A549 (cell line): ENCODE measurements at regions of chr11 and their contacts with region 1.

Region 1: DNA sequence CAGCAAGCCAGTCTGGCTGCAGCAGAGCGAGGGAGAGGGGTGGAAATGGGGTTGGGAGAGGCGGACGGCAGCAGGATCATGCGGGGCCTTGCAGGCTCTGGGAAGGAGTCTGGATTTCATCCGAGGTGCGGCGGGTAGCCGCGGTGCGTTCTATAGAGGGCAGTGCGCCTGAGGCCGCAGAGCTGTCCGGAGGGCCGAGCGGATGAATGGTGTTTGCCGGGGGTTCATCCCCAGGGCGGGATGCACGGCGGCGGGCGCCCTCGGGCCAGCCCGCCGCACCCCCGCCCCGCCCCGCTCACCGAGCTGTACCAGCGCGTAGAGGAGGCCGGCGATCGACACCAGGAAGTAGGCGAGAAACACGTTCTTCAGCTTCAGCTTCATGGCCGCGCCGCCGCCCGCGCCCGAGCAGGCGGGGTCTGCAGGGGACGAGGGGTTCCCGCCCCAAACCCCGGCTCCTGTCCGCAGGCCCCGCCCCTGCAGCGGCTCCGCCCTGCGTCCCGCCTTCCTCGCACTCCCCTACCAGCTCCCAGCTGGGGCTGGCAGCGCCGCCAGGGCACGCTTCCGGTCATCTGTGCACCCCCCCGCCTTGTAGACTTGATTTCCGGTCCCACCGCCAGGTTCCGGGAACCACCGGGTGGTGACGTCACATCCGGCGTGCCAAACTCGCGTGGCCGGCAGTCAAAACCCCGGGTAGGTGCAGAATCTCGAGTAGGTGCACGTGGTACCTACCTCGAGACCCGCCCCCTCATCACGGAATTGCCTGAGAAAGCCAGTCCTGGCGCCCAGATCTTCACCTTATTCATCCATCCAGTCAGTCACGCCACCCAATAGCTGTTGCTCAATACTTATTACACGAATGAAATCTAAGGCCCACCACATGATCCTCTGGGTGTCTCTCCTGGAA is at the start of gene B3GAT3:
- DNase-seq: peak; percentile 99
- ATAC-seq: peak; percentile 96 to 97
- H3K4me3 ChIP-seq: peak within 1 kb of the TSS; percentile 77
- H3K27ac ChIP-seq: peak within 1 kb of the TSS; percentile 92
- H3K4me1 ChIP-seq: peaks cover 15% of the 10 kb centered on the region
- CTCF ChIP-seq: 0 out of 3 replicates have a peak, but pooled peaks have one; percentile 6
- EP300 ChIP-seq: no peak
- POLR2A ChIP-seq: peak; percentile 80
- RAD21 ChIP-seq: no peak
- polyA plus RNA-seq, gene B3GAT3: 19.0 and 20.5 TPM in 2 replicates

Region 2: GRCh38 chr11:62399190-62399877 is 222.5 kb before region 1 on chr11:
- CTCF ChIA-PET with region 1: no interaction called
- POLR2A ChIA-PET with region 1: no interaction called
- DNase-seq: no peak
- ATAC-seq: no peak
- H3K4me3 ChIP-seq: no peak overlapping the region
- H3K27ac ChIP-seq: peak overlapping the region in 1 of 2 experiments; percentile 78; a peak in 3 of 6 replicates
- H3K4me1 ChIP-seq: peaks cover 28% of the 10 kb centered on the region
- CTCF ChIP-seq: no peak
- EP300 ChIP-seq: no peak
- POLR2A ChIP-seq: no peak
- RAD21 ChIP-seq: no peak

Region 3: GRCh38 chr11:62645956-62646824 is 24.4 kb after region 1 on chr11 and contains the start of gene GANAB:
- CTCF ChIA-PET with region 1: interaction called, 4 read pairs
- POLR2A ChIA-PET with region 1: interaction called, 11 read pairs
- DNase-seq: peak; percentile 97 to 99
- ATAC-seq: peak; percentile 97 to 99
- H3K4me3 ChIP-seq: peak within 1 kb of the TSS; percentile 79
- H3K27ac ChIP-seq: peak within 1 kb of the TSS; percentile 94 to 97
- H3K4me1 ChIP-seq: peaks cover 11% of the 10 kb centered on the region
- CTCF ChIP-seq: no peak
- EP300 ChIP-seq: no peak
- POLR2A ChIP-seq: peak; percentile 89
- RAD21 ChIP-seq: no peak
- polyA plus RNA-seq, gene GANAB: 215 and 308 TPM in 2 replicates

Region 4: DNA sequence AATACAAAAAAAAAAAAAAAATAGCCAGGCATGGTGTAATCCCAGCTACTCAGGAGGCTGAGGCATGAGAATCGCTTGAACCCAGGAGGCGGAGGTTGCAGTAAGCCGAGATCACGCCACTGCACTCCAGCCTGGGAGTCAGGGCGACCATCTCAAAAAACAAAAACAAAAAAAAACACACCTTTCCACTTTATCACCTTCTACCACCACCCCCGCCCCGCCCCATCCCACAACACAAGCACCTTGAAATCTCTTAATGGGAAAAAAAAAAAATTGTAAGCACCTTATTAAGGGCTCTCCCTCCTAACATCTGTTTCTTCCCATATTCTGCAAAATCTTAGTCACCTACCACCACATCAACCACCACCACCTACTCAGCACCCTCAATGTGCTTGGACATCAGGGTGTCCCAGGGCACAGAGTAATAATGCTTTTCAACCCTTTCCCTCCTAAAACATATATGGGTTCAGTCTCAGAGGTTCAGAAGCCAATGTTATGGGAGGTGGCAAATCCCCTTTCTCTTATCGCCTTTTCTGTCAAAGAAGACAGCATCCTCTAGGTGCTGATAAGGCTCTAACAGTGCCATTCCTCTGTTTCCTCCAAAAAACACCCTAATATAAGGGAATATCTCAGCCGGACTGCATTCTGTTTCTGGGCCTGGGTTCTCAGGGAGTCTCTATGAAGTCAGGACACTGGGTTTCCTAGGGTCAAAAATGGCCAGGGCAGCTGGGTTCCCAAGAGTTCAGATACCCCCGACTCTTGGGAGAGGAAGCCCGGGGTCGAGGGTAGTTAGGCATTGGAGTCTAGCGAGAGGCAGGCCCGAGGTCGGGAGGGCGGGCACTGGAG is 30.6 kb after region 1 on chr11:
- CTCF ChIA-PET with region 1: interaction called, 4 read pairs
- POLR2A ChIA-PET with region 1: interaction called, 11 read pairs
- DNase-seq: no peak
- ATAC-seq: peak in 1 of 2 experiments; percentile 60; a peak in 3 of 6 replicates
- H3K4me3 ChIP-seq: peak overlapping the region; percentile 75
- H3K27ac ChIP-seq: peak overlapping the region; percentile 85 to 97
- H3K4me1 ChIP-seq: peaks cover 10% of the 10 kb centered on the region; the same call in 2 of the 3 replicates
- CTCF ChIP-seq: no peak
- EP300 ChIP-seq: no peak
- POLR2A ChIP-seq: no peak
- RAD21 ChIP-seq: no peak